Activated CD4-positive, alpha-beta T cell treated with anti-CD3 and anti-CD28 coated beads, Interleukin-2, amount 10 ng/mL, durations not matched to agents 24 days and 14 days (primary cell): ENCODE measurements at regions of chr5 and their contacts with region 1.

Region 1: DNA sequence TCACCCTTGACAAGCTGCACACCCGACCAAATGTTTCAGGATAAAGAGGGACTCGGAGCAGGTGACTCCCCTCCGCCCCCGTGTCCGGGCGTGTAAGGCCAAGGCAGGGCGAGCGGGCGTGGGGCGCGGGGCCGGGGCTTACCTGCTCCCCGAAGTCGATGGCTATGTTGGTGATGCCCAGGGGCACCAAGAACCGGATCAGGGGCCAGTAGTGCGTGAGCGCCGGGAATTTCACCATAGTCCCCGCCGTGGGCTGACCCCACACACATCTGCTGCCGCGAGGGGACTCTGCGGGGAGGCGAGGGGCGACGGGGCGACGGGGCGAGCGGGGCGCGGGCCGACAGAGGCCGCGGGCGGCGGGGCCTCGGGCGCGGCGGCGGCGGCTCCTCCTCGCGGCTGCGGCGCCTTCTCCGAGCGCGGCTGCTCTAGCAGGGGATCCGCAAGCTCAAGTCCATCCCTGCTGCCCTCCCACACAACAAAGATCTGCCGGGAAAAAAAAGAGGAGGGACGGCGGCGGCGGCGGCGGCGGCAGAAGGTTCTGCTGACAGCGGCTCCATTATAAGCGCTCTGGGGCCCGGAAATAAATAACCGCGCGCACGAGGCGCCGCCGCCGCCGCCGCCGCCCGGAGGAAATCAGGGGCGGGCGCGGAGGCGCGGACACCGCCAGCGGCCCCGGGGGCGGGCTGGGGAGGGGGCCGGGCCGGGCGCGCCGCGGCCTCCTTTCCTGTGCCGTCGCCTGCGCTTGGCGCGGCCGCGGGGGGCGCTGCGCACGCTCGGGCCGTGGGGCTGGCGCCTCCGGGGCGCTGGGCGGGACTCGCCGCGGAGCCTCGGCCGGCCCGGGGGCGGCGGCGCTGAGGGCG is at the start of gene ANKH:
- DNase-seq: peak; percentile 95
- H3K4me3 Mint-ChIP-seq: peak within 1 kb of the TSS; percentile 88
- H3K27ac Mint-ChIP-seq: peak within 1 kb of the TSS; percentile 91
- H3K4me1 Mint-ChIP-seq: peaks cover 26% of the 10 kb centered on the region
- H3K27me3 Mint-ChIP-seq: peaks cover 19% of the 10 kb centered on the region
- total RNA-seq, gene ANKH: 41.6 and 46.7 TPM in 2 replicates

Region 2: DNA sequence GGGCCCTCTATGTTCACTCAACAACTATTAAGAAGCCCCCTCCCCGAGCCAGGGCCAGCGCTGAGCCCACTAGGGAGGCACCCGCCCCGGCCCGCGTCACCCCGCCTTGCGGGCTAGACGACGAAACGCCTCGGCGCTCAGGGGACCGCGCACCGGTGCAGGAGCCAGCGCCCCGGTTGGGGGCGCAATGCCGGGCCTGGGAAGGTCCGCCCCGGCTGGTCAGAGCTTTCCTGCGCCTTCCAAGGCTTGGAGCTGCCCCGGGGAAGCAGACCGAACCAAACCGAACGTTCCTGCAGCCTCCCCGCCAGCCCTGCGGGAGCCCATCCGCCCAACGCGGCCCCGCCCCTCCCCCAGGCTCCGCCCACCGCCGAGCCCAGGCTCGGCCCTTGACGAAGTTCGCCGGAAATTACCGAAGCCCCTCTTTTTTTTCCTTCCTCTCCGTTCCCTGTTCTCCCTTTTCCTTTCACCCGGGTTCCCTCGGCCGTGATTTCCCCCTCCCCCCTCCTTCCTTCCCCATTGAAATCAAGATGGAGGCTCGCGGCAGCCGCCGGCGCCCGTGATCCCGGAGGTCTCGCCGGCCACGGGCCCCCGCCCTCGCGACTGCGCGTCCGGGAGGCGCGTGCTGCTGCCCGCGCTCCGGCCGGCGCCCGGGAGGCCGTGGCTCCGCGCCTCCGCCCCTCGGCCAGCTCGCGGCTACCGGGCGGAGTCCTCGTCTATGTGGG is 728.5 kb before region 1 on chr5 and contains the start of gene TRIO:
- intact Hi-C with region 1: loop called (anchors 10 kb)
- DNase-seq: peak; percentile 94
- H3K4me3 Mint-ChIP-seq: peak within 1 kb of the TSS; percentile 87
- H3K27ac Mint-ChIP-seq: peak within 1 kb of the TSS; percentile 68
- H3K4me1 Mint-ChIP-seq: peaks cover 10% of the 10 kb centered on the region
- H3K27me3 Mint-ChIP-seq: peaks cover 58% of the 10 kb centered on the region
- total RNA-seq, gene TRIO: 8.7 and 14.0 TPM in 2 replicates

Region 3: GRCh38 chr5:14675865-14676300 is 195.6 kb before region 1 on chr5:
- intact Hi-C with region 1: loop called (anchors 5 kb)
- DNase-seq: peak; percentile 59
- H3K4me3 Mint-ChIP-seq: peak overlapping the region; percentile 73
- H3K27ac Mint-ChIP-seq: peak overlapping the region; percentile 84
- H3K4me1 Mint-ChIP-seq: peaks cover 62% of the 10 kb centered on the region
- H3K27me3 Mint-ChIP-seq: no peaks in the 10 kb centered on the region

Region 4: DNA sequence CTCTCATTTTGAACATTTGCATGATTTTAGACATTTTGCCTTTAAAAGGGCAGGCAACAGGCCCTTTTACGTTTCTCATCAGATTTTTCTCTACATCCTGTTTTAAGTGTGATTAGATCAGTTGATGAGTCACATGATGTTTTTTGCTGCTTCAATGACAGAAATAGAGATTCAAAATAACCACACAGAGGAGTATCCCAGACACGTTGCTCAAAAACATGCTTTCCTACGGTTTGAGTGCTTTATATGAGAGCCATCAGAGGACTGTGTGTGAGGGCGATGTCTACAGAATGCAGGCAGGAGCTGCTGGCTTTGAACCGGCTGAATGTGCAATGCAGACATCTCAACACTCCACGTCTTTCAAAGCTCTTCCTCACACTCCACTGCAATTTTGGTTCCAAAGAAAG is 164.8 kb before region 1 on chr5:
- intact Hi-C with region 1: loop called (anchors 5 kb)
- DNase-seq: peak; percentile 87
- H3K4me3 Mint-ChIP-seq: peak overlapping the region; percentile 82
- H3K27ac Mint-ChIP-seq: peak overlapping the region; percentile 99
- H3K4me1 Mint-ChIP-seq: peaks cover 69% of the 10 kb centered on the region
- H3K27me3 Mint-ChIP-seq: no peaks in the 10 kb centered on the region

Region 5: GRCh38 chr5:14809369-14810155 is 61.9 kb before region 1 on chr5:
- intact Hi-C with region 1: loop called (anchors 1 kb)
- DNase-seq: peak; percentile 93
- H3K4me3 Mint-ChIP-seq: peak overlapping the region; percentile 65
- H3K27ac Mint-ChIP-seq: peak overlapping the region; percentile 80
- H3K4me1 Mint-ChIP-seq: peaks cover 37% of the 10 kb centered on the region
- H3K27me3 Mint-ChIP-seq: peaks cover 4% of the 10 kb centered on the region

Region 6: GRCh38 chr5:14996997-14997396 is 125.6 kb after region 1 on chr5:
- intact Hi-C with region 1: loop called (anchors 2 kb)
- DNase-seq: no peak
- H3K4me3 Mint-ChIP-seq: no peak overlapping the region
- H3K27ac Mint-ChIP-seq: no peak overlapping the region
- H3K4me1 Mint-ChIP-seq: peaks cover 22% of the 10 kb centered on the region
- H3K27me3 Mint-ChIP-seq: peaks cover 21% of the 10 kb centered on the region